ENCODE measurements at regions of chr12 and their contacts with region 1.

Region 1: GRCh38 chr12:42372154-42372791 is 46.3 kb downstream of the PPHLN1 start:
- DNase-seq: peak; percentile 46
- CTCF ChIP-seq: peak; percentile 75

Region 2: GRCh38 chr12:42023733-42024494 is 348.4 kb before region 1 on chr12:
- CTCF ChIA-PET with region 1: interaction called, 10 read pairs
- POLR2A ChIA-PET with region 1: no interaction called
- DNase-seq: peak; percentile 64
- CTCF ChIP-seq: peak; percentile 96

Region 3: DNA sequence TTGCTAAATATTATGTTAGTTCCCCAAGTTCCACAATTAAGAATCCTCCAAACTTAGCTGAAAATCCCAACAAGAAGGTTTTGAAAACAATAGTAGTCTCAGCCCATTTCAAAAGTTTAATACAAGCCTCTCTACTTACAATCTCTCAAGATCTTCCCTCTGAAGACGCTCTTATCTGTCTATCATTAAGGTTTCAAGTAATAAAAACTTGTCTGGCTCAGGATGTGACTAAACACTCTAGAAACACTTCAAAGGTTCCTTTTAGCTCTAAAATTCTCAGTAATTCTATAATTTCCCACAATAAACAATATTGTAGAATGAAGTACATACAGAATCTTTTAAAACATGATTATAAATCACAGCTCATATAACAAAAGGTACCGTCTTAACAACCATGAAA is 150.5 kb before region 1 on chr12:
- CTCF ChIA-PET with region 1: no interaction called
- POLR2A ChIA-PET with region 1: no interaction called
- DNase-seq: no peak
- CTCF ChIP-seq: no peak

Region 4: DNA sequence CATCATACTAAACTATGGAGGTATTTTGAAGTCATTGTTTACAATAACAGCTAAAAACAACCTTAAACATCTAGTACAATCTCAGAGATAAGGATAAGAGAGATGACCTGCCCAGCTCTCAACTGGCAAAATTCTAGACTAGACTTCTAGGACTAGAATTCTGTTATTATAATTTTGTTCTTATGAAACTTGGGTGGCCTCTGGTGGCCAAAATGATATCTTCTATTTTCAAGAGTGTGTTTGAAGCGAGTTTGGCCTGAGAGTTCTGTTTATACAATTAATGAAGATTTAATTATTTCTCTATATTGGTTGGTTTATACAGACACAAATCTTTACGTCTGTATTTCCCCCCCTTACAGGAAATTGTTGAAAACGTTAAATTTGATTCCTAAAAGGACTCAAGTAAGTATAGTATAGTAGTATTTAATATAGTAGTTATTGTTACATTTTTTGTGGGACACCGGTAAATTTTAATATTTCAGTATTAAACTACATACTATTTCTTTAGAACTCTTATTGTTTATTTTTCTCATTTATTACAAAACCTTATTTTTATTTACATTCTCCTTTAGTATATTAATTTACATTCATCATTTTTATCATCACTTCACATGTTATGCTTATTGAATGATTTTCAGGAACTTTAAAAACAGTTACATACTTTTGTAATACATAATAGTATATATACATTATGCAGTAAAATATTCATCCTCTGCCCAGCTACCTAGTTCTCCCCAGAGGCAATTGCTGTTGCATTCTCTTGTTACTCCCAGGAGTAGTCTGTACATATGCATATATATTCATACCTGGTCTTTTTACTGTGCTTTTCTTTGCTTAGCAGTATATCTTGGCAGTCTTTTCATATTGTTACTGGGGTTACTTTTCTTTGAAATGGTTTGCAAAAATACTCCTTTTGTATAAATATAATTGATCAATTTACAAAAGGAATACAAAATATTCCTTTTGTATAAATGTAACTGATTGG is 39.7 kb before region 1 on chr12:
- CTCF ChIA-PET with region 1: interaction called, 10 read pairs
- POLR2A ChIA-PET with region 1: no interaction called
- DNase-seq: peak; percentile 61
- CTCF ChIP-seq: peak; percentile 61

Region 5: DNA sequence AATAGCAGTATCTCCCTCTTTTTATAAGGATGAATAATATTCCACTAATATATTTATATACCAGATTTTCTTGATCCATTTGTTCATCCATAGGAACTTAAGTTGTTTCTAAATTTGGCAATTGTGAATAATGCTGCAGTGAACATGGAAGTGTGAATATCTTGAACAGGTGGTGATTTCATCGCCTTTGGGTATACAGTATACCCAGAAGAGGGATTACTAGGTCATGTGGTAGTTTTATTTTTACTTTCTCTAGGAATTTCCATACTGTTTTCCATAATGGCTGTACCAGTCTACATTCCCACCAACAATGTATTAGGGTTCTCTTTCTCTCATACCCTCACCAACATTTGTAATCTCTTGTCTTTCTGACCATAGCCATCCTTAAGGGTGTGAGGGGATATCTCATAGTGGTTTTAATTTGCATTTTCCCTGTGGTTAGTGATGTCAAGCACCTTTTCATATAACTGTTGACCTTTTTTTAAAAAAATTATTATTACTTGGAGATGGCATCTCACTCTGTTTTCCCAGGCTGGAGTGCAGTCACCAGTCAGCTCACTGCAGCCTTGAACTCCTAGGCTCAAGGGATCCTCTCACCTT is 25.8 kb before region 1 on chr12:
- CTCF ChIA-PET with region 1: interaction called, 21 read pairs
- POLR2A ChIA-PET with region 1: no interaction called
- DNase-seq: no peak
- CTCF ChIP-seq: no peak

Region 6: GRCh38 chr12:42396473-42397259 is 24.4 kb after region 1 on chr12:
- CTCF ChIA-PET with region 1: interaction called, 21 read pairs
- POLR2A ChIA-PET with region 1: no interaction called
- DNase-seq: no peak
- CTCF ChIP-seq: no peak

Region 7: GRCh38 chr12:42790761-42791151 is 418.5 kb after region 1 on chr12:
- CTCF ChIA-PET with region 1: no interaction called
- POLR2A ChIA-PET with region 1: no interaction called
- DNase-seq: no peak
- CTCF ChIP-seq: no peak

Measured in GM10248 (cell line).